ENCODE measurements at regions of chr6 and their contacts with region 1.

Region 1: DNA sequence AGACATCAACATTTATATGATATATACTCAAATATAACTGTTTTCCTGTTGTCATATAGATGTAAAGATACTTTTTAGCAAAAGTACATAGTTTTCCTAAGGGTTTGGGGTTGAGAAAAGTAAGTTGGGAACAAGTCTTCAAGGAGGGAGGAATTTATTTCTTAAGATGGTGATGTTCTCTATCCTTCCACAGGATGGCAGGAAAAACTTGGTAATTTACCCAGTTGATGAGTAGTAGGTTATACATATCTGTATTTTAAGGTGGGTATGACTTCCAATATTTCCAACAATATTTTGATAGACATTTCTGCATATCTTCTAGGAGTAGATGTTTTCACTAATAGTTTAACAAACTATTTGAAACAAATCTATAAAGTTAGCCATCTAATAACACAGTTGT is 254.4 kb downstream of the RIMS1 start:
- DNase-seq: no peak
- H3K4me3 Mint-ChIP-seq: no peak overlapping the region
- H3K27ac Mint-ChIP-seq: no peak overlapping the region
- H3K4me1 Mint-ChIP-seq: no peaks in the 10 kb centered on the region
- H3K27me3 Mint-ChIP-seq: no peaks in the 10 kb centered on the region
- CTCF ChIP-seq: no peak

Region 2: GRCh38 chr6:72061286-72061685 is 79.5 kb before region 1 on chr6:
- CTCF ChIA-PET with region 1: no interaction called
- intact Hi-C with region 1: no loop called
- DNase-seq: no peak
- H3K4me3 Mint-ChIP-seq: no peak overlapping the region
- H3K27ac Mint-ChIP-seq: no peak overlapping the region
- H3K4me1 Mint-ChIP-seq: no peaks in the 10 kb centered on the region
- H3K27me3 Mint-ChIP-seq: no peaks in the 10 kb centered on the region
- CTCF ChIP-seq: no peak

Region 3: DNA sequence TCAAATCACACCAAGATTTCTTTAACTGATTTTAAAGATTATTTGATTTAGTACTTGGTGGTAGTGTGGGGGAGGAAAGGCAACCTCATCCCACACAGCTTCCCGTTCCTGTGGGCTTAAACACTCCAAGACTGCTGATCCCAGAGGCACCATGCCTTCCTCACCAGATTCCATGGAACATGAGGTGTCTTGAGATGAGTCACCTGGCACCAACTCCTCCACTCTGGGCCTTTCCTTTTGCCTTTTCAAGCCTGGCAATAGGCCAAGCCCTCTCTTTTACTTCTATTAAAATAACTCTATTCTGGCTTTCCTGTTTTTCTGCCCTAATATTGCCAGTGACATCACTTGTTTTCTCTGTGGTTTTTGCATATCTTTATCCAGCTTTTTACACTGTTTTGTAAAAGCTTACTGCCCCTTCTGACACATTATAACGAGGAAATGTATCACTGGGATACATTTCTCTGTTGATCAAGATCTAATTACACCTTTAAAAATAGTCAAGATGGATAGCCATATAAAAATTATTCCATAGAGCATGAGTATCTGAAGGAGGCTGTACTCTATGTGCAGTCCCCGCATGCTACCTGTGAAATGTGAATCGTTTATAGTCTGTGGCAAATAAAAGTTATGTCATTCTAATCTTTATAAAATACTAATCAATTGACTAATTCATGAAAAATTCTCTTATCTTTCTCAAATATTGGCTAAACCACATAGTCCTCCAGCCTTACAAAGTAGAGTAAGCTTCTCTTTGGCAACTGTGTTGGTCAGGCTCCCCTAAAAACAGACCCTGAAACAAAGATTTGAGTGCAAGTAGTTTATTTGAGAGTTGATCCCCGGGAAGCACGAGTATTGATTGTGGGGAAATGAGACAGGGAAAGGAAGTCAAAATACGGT is 223.3 kb after region 1 on chr6:
- CTCF ChIA-PET with region 1: no interaction called
- intact Hi-C with region 1: loop called (anchors 10 kb)
- DNase-seq: peak; percentile 57
- H3K4me3 Mint-ChIP-seq: no peak overlapping the region
- H3K27ac Mint-ChIP-seq: peak overlapping the region; percentile 8
- H3K4me1 Mint-ChIP-seq: peaks cover 24% of the 10 kb centered on the region
- H3K27me3 Mint-ChIP-seq: no peaks in the 10 kb centered on the region
- CTCF ChIP-seq: no peak